ENCODE measurements at regions of chr4 and their contacts with region 1.

Region 1: DNA sequence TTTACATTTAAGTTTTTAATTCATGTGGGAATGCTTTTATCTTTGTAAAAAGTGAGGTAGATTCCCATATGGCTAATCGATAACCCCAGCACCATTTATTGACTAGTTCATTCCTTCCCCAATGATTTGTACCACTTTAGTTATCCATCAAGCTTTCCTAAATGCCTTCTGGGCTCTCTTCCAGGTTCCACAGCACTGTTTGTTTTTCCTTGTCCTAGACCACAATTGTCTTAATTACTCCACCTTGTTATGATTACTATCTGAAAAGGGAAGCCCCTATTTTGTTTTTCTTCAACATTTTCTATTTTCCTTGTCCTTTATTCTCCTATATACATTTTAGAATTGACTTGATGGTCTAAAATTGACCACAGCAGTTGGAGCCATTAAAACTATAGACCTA is 48.5 kb upstream of the GPRIN3 start:
- DNase-seq: no peak

Region 2: GRCh38 chr4:89172860-89173259 is 183.2 kb before region 1 on chr4:
- intact Hi-C with region 1: no loop called
- DNase-seq: no peak

Region 3: DNA sequence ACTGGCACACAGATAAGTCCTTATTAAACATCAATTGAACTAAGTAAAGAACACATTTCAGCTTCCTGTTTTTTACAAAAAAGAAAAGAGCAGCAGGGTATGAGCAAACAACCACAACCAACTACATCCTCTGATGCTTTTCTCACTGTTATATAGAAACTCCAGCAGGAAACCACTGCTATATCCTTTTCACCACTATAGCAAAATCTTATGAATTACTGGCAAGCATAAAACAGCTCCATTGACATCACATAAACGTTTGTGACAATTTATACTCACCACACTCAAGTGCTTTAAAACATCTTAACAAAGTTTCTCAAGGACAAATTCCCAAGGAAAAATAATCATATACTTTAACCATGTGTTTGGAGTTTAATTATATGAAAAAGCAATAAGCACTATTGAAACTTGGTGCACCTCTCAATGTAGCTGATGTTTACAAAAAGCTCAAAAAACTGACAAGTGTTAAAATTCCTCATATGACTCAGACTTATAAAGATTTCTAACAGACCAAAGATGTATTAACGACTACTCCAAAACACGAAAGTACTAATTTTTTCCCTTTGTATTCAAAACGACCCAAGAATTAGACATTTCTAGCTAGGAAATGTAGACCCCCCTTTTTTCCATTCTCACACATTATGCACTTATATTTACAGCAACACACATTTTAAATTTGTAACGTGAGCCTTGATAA is 61.4 kb before region 1 on chr4:
- intact Hi-C with region 1: loop called (anchors 10 kb)
- DNase-seq: no peak

Region 4: DNA sequence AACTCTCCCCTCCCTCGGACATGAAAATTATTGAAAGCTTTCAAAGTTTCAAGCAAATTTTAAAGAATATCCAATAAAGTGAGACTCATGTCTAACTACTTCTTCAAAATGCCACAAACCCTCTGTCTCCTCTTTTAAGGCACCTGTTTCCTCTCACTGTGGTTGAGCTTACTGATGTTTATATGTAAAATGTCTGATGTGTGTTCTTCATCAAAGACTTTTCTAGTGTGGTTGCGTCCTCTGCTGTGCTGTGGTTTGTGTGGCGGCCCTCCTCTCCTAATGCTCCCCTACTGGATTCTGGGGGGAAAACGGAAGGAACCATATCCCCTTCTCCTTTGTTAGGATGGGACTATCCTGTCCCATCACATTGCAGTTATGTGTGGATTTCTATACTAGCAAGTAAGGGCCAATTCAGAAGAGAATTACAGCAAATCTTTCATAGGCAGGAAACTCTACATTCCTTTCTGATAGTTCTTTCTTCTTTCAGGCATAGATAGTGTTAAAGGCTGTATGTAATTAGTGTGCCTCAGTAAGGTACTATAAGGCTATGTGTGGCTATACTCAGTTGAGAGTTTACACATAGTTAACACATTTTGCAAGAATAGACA is 172.5 kb after region 1 on chr4:
- intact Hi-C with region 1: no loop called
- DNase-seq: no peak

Measured in posterior cingulate gyrus (tissue), 11 donors.